PC-3 (cell line): ENCODE measurements at regions of chr4 and their contacts with region 1.

Region 1: DNA sequence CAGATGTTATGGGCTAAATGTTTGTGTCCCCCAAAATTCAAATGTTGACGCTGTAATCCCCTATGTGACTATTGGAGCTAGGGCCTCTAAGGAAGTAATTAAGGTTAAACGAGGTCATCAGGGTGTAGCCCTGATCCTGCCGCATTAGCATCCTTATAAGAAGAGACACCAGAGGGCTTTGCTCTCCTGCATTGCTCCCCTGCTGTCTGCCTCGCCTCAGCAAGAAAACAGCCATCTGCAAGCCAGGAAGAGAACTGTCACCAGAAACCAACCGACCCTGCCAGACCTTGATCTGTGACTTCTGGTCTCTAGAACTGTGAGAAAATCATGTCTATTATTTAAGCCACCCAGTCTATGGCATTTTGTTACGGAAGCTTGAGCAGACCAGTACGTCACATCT is 331.9 kb downstream of the DCTD start:
- DNase-seq: no peak
- ATAC-seq: no peak
- H3K4me3 ChIP-seq: no peak overlapping the region
- H3K27ac ChIP-seq: no peak overlapping the region
- H3K4me1 ChIP-seq: no peaks in the 10 kb centered on the region
- H3K27me3 ChIP-seq: no peaks in the 10 kb centered on the region
- CTCF ChIP-seq: no peak

Region 2: DNA sequence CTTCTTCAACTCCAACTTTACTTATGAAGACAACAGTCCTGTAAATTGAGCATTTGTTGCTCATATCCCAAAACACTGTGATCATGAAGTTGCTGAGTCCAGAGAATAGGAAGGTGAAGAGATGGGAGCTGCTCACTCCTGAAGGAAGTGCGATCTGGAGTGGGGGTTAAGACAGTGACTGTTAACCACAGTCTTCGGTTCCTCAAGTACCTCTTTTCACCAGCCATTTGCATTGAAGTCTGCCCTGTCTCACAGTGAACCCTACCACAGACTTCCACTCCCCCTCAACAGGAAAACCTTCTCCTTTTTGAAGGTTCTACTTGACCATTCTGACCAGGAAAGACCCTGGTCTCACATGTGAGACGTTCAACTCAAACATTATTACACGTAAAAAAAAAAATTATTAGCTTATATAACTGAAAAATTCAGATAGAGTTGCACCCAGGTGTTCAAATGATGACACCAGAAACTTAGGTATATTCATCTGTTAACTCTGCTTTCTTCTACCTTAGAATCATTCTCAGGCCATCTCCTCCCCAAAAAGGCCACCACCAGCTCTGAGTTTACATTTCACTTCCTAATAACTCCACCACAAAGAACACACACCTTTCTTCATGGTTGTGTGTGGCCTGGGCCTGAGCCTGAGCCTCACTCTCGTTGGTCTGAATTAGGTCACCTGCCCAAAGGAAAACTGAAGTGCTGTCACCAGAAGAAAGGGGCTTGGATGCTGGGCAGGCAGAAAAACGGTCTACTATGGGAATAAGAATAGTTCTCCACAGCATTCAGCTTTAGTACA is 132.7 kb after region 1 on chr4:
- CTCF ChIA-PET with region 1: no interaction called
- POLR2A ChIA-PET with region 1: interaction called, 19 read pairs
- intact Hi-C with region 1: no loop called
- DNase-seq: no peak
- ATAC-seq: no peak
- H3K4me3 ChIP-seq: no peak overlapping the region
- H3K27ac ChIP-seq: no peak overlapping the region
- H3K4me1 ChIP-seq: no peaks in the 10 kb centered on the region
- H3K27me3 ChIP-seq: no peaks in the 10 kb centered on the region
- CTCF ChIP-seq: no peak